SK-N-SH (cell line): ENCODE measurements at regions of chr10 and their contacts with region 1.

Region 1: GRCh38 chr10:123380497-123381085 is 226.4 kb downstream of the BUB3 start:
- DNase-seq: peak; percentile 58
- H3K4me3 ChIP-seq: no peak overlapping the region
- H3K27ac ChIP-seq: no peak overlapping the region
- H3K4me1 ChIP-seq: no peaks in the 10 kb centered on the region; a peak in 1 of 4 replicates
- H3K27me3 ChIP-seq: no peaks in the 10 kb centered on the region
- CTCF ChIP-seq: peak; percentile 30; the same call in 1 of the 2 replicates
- EP300 ChIP-seq: no peak
- RAD21 ChIP-seq: peak; percentile 83

Region 2: GRCh38 chr10:123043409-123043925 is 337.1 kb before region 1 on chr10:
- CTCF ChIA-PET with region 1: interaction called, 51 read pairs
- POLR2A ChIA-PET with region 1: no interaction called
- DNase-seq: peak; percentile 67
- H3K4me3 ChIP-seq: 0 out of 4 replicates have a peak overlapping the region, but pooled peaks of 1 of the 2 experiments have one; percentile 27
- H3K27ac ChIP-seq: no peak overlapping the region
- H3K4me1 ChIP-seq: no peaks in the 10 kb centered on the region
- H3K27me3 ChIP-seq: no peaks in the 10 kb centered on the region
- CTCF ChIP-seq: peak; percentile 75
- EP300 ChIP-seq: no peak
- RAD21 ChIP-seq: peak; percentile 85

Region 3: GRCh38 chr10:123139521-123140163 is 240.9 kb before region 1 on chr10:
- CTCF ChIA-PET with region 1: interaction called, 110 read pairs
- POLR2A ChIA-PET with region 1: no interaction called
- DNase-seq: no peak
- H3K4me3 ChIP-seq: no peak overlapping the region
- H3K27ac ChIP-seq: no peak overlapping the region
- H3K4me1 ChIP-seq: peaks cover 0 to 4% of the 10 kb centered on the region in 2 experiments; a peak in 1 of 4 replicates
- H3K27me3 ChIP-seq: peaks cover 96% of the 10 kb centered on the region
- CTCF ChIP-seq: no peak
- EP300 ChIP-seq: no peak
- RAD21 ChIP-seq: no peak

Region 4: GRCh38 chr10:123229927-123230632 is 150.5 kb before region 1 on chr10:
- CTCF ChIA-PET with region 1: interaction called, 11 read pairs
- POLR2A ChIA-PET with region 1: no interaction called
- DNase-seq: no peak
- H3K4me3 ChIP-seq: no peak overlapping the region
- H3K27ac ChIP-seq: no peak overlapping the region
- H3K4me1 ChIP-seq: no peaks in the 10 kb centered on the region
- H3K27me3 ChIP-seq: no peaks in the 10 kb centered on the region
- CTCF ChIP-seq: no peak
- EP300 ChIP-seq: no peak
- RAD21 ChIP-seq: no peak

Region 5: DNA sequence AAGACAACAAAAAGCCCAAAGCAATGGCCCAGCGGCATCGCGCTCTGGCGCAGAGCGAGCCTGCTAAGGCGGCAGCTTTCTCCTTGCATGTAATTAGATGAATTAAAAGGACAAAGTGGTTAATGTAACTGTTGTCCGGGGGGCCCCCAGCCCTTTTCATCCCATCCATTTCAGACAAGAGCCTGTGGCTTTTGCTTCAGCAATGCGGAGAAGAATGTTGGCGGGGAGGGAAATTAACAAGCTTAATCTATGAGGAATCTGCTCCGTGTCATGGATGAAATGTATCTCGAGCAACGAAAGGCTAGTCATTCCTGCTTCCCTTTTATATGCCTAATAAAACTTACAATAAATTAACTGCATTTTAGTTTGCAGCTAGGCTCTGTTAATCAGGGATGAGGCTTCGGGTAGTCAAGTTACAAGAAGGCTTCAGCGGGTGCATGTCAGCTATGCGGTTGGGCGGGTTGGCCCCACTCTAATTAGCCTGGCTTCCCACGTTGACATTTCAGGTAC is 23.1 kb before region 1 on chr10:
- CTCF ChIA-PET with region 1: interaction called, 12 read pairs
- POLR2A ChIA-PET with region 1: no interaction called
- DNase-seq: peak; percentile 51
- H3K4me3 ChIP-seq: no peak overlapping the region
- H3K27ac ChIP-seq: peak overlapping the region in 1 of 2 experiments; percentile 81; a peak in 2 of 4 replicates
- H3K4me1 ChIP-seq: peaks cover 0 to 49% of the 10 kb centered on the region in 2 experiments; a peak in 2 of 4 replicates
- H3K27me3 ChIP-seq: no peaks in the 10 kb centered on the region
- CTCF ChIP-seq: no peak
- EP300 ChIP-seq: no peak
- RAD21 ChIP-seq: no peak